GM12878 (cell line): ENCODE measurements at regions of chr20 and their contacts with region 1.

Region 1: GRCh38 chr20:10090588-10091166 is 55.9 kb downstream of the ANKEF1 start:
- DNase-seq: no peak
- ATAC-seq: peak; percentile 92
- H3K4me3 ChIP-seq: no peak overlapping the region
- H3K27ac ChIP-seq: no peak overlapping the region
- H3K4me1 ChIP-seq: no peaks in the 10 kb centered on the region
- H3K27me3 ChIP-seq: no peaks in the 10 kb centered on the region
- CTCF ChIP-seq: peak; percentile 69 to 74 (median 69)
- EP300 ChIP-seq: no peak
- POLR2A ChIP-seq: no peak
- RAD21 ChIP-seq: peak; percentile 65

Region 2: DNA sequence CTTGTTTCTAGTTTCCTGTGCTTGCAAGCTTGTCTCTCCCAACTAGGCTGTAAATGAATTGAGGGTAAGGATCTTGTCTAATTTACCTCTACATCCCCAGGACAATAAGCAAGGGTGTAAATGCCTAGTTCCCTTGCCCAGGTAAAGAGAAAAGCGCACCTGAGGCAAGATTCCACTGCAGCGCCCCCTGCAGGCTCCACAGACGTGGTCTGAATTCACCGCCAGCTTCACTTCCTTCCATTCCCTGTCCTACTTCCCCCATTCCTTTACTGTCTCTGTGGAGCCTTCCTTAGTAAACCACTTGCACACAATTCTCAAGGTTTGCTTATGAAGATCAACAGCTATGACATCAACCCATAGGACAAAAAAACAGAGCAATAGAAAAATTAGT is 13.6 kb before region 1 on chr20:
- CTCF ChIA-PET with region 1: interaction called, 17 read pairs
- POLR2A ChIA-PET with region 1: no interaction called
- RAD21 ChIA-PET with region 1: no interaction called
- SMC1A ChIA-PET with region 1: interaction called, 4 read pairs
- in situ Hi-C with region 1: no loop called
- intact Hi-C with region 1: no loop called
- DNase-seq: no peak
- ATAC-seq: no peak
- H3K4me3 ChIP-seq: no peak overlapping the region
- H3K27ac ChIP-seq: no peak overlapping the region
- H3K4me1 ChIP-seq: no peaks in the 10 kb centered on the region
- H3K27me3 ChIP-seq: no peaks in the 10 kb centered on the region; a peak in 1 of 4 replicates
- CTCF ChIP-seq: peak; percentile 12 to 41 (median 24); a peak in 4 of 6 replicates
- EP300 ChIP-seq: no peak
- POLR2A ChIP-seq: no peak
- RAD21 ChIP-seq: no peak

Region 3: GRCh38 chr20:10412591-10413408 is 322.1 kb after region 1 on chr20:
- CTCF ChIA-PET with region 1: interaction called, 7 read pairs
- POLR2A ChIA-PET with region 1: no interaction called
- RAD21 ChIA-PET with region 1: no interaction called
- SMC1A ChIA-PET with region 1: no interaction called
- in situ Hi-C with region 1: no loop called
- intact Hi-C with region 1: loop called (anchors 10 kb)
- DNase-seq: no peak
- ATAC-seq: peak; percentile 85
- H3K4me3 ChIP-seq: no peak overlapping the region
- H3K27ac ChIP-seq: no peak overlapping the region
- H3K4me1 ChIP-seq: peaks cover 8% of the 10 kb centered on the region
- H3K27me3 ChIP-seq: no peaks in the 10 kb centered on the region
- CTCF ChIP-seq: peak; percentile 19 to 32 (median 20); a peak in 1 of 6 replicates
- EP300 ChIP-seq: peak; percentile 26 to 53; a peak in 2 of 4 replicates
- POLR2A ChIP-seq: no peak
- RAD21 ChIP-seq: no peak